AG04450 (cell line): ENCODE measurements at regions of chr6 and their contacts with region 1.

Region 1: GRCh38 chr6:134938896-134939295 is 11.0 kb downstream of the ALDH8A1 start:
- DNase-seq: no peak
- H3K4me3 ChIP-seq: no peak overlapping the region
- H3K27ac ChIP-seq: no peak overlapping the region
- H3K27me3 ChIP-seq: no peaks in the 10 kb centered on the region
- CTCF ChIP-seq: no peak

Region 2: DNA sequence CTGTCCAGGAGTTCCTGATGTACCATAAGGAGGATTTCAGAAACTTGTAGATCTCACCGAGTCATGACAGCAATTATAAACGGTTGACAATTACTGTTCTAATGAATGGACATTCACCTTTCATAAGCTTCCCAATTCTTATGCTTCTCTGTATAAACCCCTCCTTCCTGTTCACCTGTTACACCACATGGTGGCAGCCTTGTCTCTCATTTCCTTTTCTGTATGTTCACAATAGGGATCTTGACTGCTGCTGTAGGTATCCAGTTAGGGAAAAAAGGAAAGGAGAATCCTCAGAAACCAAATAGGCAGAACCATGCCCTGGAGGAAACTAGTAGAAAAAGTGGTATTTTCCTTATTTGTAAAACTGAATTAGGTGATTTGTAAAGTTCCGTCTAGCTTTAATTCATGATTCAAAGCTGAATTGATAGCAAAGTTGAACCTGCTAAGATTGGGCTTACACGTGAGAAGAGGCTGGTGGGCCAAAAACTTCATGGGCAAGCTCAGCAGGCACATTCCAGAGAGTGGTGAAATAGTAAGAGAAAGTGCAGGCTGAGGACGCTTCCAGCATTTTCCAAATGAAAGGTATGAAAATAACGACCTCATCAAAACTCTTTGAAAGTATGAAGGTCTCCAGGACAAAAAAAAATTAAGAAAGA is 1014.8 kb before region 1 on chr6:
- CTCF ChIA-PET with region 1: interaction called, 13 read pairs
- POLR2A ChIA-PET with region 1: no interaction called
- DNase-seq: peak; percentile 59
- H3K4me3 ChIP-seq: no peak overlapping the region
- H3K27ac ChIP-seq: no peak overlapping the region
- H3K27me3 ChIP-seq: no peaks in the 10 kb centered on the region
- CTCF ChIP-seq: peak; percentile 88

Region 3: GRCh38 chr6:134123666-134124208 is 815.2 kb before region 1 on chr6:
- CTCF ChIA-PET with region 1: interaction called, 109 read pairs
- POLR2A ChIA-PET with region 1: no interaction called
- DNase-seq: peak; percentile 75
- H3K4me3 ChIP-seq: no peak overlapping the region
- H3K27ac ChIP-seq: no peak overlapping the region
- H3K27me3 ChIP-seq: no peaks in the 10 kb centered on the region
- CTCF ChIP-seq: peak; percentile 63

Region 4: DNA sequence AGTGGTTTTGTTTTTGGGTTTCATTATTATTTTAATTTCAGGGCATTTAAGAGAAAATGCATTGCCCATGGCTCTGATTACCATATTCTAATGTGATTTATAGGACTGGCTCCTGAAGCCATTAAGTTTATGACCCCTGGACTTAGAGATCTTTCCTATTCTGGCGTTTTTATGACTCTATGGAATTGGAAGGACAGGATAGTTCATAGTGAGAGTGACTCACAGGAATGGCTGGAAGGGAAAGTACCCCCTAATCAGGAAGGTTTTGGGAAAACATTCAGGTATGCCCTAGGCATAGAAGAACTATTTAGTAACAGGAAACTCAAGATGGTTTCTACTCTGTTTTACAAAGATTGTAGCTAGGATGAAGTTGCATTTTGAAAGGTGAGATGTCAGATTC is 777.9 kb before region 1 on chr6:
- CTCF ChIA-PET with region 1: interaction called, 73 read pairs
- POLR2A ChIA-PET with region 1: no interaction called
- DNase-seq: no peak
- H3K4me3 ChIP-seq: no peak overlapping the region
- H3K27ac ChIP-seq: no peak overlapping the region
- H3K27me3 ChIP-seq: no peaks in the 10 kb centered on the region
- CTCF ChIP-seq: no peak

Region 5: DNA sequence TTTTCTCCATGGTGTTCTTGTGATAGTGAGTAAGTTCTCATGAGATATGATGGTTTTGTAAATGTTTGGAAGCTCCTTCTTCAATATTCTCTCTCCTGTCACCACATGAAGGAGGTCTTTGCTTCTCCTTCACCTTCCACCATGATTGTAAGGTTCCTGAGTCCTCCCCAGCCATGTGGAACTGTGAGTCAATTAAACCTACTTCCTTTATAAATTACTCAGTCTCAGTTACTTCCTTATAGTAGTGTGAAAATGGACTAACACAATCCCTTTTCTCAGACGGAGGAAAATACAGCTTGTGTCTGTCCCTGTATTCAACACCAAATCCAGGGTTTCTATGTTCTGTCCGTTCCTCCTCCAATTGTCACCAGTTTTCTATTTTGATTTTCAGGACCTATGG is 170.0 kb before region 1 on chr6:
- CTCF ChIA-PET with region 1: no interaction called
- POLR2A ChIA-PET with region 1: no interaction called
- DNase-seq: no peak
- H3K4me3 ChIP-seq: no peak overlapping the region
- H3K27ac ChIP-seq: no peak overlapping the region
- H3K27me3 ChIP-seq: no peaks in the 10 kb centered on the region
- CTCF ChIP-seq: no peak

Region 6: GRCh38 chr6:134822920-134823709 is 115.8 kb before region 1 on chr6:
- CTCF ChIA-PET with region 1: interaction called, 18 read pairs
- POLR2A ChIA-PET with region 1: no interaction called
- DNase-seq: peak; percentile 66
- H3K4me3 ChIP-seq: no peak overlapping the region
- H3K27ac ChIP-seq: no peak overlapping the region
- H3K27me3 ChIP-seq: no peaks in the 10 kb centered on the region
- CTCF ChIP-seq: peak; percentile 95

Region 7: DNA sequence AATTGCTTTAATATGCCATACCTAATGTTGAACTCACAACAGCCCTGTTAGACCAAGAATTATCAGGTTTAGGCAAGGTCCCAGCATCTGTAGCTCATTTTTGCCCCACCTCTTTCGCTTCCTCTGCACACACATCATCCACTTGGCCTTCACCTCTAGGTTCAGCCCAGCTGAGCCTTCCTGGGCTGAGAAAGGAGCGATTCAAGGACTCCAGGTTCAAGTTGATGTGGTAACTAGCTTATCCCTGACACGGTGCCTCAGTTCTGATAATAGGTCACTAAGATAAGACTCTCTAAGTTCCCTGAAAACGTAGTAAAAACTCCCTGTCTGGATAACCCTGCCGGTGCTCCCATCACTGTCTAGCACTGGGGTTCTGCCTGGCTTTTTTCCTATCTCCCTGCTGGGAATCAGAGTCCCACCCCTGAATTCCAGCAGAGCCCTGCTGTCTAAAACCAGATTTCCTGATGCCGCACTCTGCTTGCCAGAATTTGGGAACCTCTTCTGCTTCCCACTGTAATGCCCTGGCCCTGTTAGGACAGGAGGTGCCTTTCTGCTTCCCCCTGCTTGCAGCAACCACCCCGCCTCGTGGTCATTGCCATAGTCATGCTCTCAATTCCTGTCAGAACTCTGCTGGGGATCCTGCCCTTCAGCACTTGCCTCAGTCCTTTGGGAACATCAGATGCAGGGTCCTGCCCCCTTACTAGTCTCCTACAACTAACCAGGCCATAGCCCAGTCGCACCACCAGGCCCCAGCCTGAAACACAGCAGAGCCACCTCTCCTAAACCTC is 36.6 kb before region 1 on chr6:
- CTCF ChIA-PET with region 1: no interaction called
- POLR2A ChIA-PET with region 1: no interaction called
- DNase-seq: no peak
- H3K4me3 ChIP-seq: no peak overlapping the region
- H3K27ac ChIP-seq: no peak overlapping the region
- H3K27me3 ChIP-seq: no peaks in the 10 kb centered on the region
- CTCF ChIP-seq: no peak

Region 8: GRCh38 chr6:134954272-134955000 is 15.5 kb after region 1 on chr6:
- CTCF ChIA-PET with region 1: interaction called, 23 read pairs
- POLR2A ChIA-PET with region 1: no interaction called
- DNase-seq: no peak
- H3K4me3 ChIP-seq: no peak overlapping the region
- H3K27ac ChIP-seq: no peak overlapping the region
- H3K27me3 ChIP-seq: no peaks in the 10 kb centered on the region
- CTCF ChIP-seq: no peak

Region 9: GRCh38 chr6:135114355-135115145 is 175.7 kb after region 1 on chr6:
- CTCF ChIA-PET with region 1: no interaction called
- POLR2A ChIA-PET with region 1: no interaction called
- DNase-seq: no peak
- H3K4me3 ChIP-seq: no peak overlapping the region
- H3K27ac ChIP-seq: no peak overlapping the region
- H3K27me3 ChIP-seq: peaks cover 16% of the 10 kb centered on the region
- CTCF ChIP-seq: no peak